ENCODE measurements at regions of chr4 and their contacts with region 1.

Region 1: GRCh38 chr4:184474263-184475095 is at the start of gene IRF2:
- DNase-seq: peak; percentile 90
- ATAC-seq: peak; percentile 66
- H3K4me3 ChIP-seq: peak within 1 kb of the TSS; percentile 99
- H3K27ac ChIP-seq: peak within 1 kb of the TSS; percentile 84
- H3K4me1 ChIP-seq: peaks cover 16% of the 10 kb centered on the region; the same call in 1 of the 2 replicates
- H3K27me3 ChIP-seq: no peaks in the 10 kb centered on the region
- CTCF ChIP-seq: no peak
- total RNA-seq, gene IRF2: 7.7 TPM in 2 replicates

Region 2: GRCh38 chr4:184143770-184144564 is 330.5 kb before region 1 on chr4:
- CTCF ChIA-PET with region 1: no interaction called
- POLR2A ChIA-PET with region 1: no interaction called
- intact Hi-C with region 1: no loop called
- DNase-seq: peak; percentile 7
- ATAC-seq: no peak
- H3K4me3 ChIP-seq: no peak overlapping the region
- H3K27ac ChIP-seq: no peak overlapping the region
- H3K4me1 ChIP-seq: no peaks in the 10 kb centered on the region
- H3K27me3 ChIP-seq: peaks cover 38% of the 10 kb centered on the region
- CTCF ChIP-seq: peak; percentile 37; the same call in 1 of the 2 replicates

Region 3: GRCh38 chr4:184417802-184418511 is 56.5 kb before region 1 on chr4:
- CTCF ChIA-PET with region 1: no interaction called
- POLR2A ChIA-PET with region 1: no interaction called
- intact Hi-C with region 1: loop called (anchors 1 kb)
- DNase-seq: peak; percentile 89
- ATAC-seq: peak; percentile 99
- H3K4me3 ChIP-seq: no peak overlapping the region
- H3K27ac ChIP-seq: peak overlapping the region; percentile 87
- H3K4me1 ChIP-seq: peaks cover 24% of the 10 kb centered on the region
- H3K27me3 ChIP-seq: no peaks in the 10 kb centered on the region
- CTCF ChIP-seq: peak; percentile 27; the same call in 1 of the 2 replicates

Region 4: GRCh38 chr4:184462724-184463123 is 11.8 kb before region 1 on chr4:
- CTCF ChIA-PET with region 1: no interaction called
- POLR2A ChIA-PET with region 1: interaction called, 17 read pairs
- intact Hi-C with region 1: no loop called
- DNase-seq: no peak
- ATAC-seq: no peak; the same call in 1 of the 2 replicates
- H3K4me3 ChIP-seq: no peak overlapping the region
- H3K27ac ChIP-seq: no peak overlapping the region
- H3K4me1 ChIP-seq: no peaks in the 10 kb centered on the region
- H3K27me3 ChIP-seq: no peaks in the 10 kb centered on the region
- CTCF ChIP-seq: no peak

Region 5: DNA sequence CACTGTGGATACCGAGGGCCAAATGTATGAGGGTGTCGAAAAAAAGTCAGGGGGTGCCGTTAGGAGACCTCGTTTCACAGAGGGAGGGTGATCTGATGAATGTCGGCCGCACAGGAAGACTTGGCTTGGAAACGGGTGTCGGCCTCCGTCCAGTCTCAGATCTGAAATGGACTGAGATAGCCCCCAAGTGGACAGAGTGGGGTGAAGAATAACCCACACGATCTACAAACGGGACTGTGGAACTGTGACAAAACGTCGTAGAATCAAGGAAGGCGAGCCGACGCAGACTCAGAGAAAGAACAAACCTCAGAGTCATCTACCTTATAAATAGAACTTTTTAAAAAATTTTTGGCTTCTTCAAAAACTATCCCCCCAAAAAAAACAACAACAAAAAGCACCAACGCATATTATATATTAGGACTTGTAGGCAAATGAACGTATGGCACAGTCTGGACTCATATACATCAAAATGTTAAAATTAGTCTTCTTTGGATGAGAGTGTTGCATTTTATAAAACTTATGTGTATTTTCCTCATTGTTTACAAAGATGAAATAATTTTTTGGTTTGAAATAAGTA is 63.6 kb after region 1 on chr4:
- CTCF ChIA-PET with region 1: interaction called, 5 read pairs
- POLR2A ChIA-PET with region 1: no interaction called
- intact Hi-C with region 1: loop called (anchors 1 kb)
- DNase-seq: peak; percentile 80
- ATAC-seq: peak; percentile 79
- H3K4me3 ChIP-seq: peak overlapping the region; percentile 85
- H3K27ac ChIP-seq: peak overlapping the region; percentile 84
- H3K4me1 ChIP-seq: peaks cover 4% of the 10 kb centered on the region; the same call in 1 of the 2 replicates
- H3K27me3 ChIP-seq: no peaks in the 10 kb centered on the region
- CTCF ChIP-seq: peak; percentile 68

Region 6: DNA sequence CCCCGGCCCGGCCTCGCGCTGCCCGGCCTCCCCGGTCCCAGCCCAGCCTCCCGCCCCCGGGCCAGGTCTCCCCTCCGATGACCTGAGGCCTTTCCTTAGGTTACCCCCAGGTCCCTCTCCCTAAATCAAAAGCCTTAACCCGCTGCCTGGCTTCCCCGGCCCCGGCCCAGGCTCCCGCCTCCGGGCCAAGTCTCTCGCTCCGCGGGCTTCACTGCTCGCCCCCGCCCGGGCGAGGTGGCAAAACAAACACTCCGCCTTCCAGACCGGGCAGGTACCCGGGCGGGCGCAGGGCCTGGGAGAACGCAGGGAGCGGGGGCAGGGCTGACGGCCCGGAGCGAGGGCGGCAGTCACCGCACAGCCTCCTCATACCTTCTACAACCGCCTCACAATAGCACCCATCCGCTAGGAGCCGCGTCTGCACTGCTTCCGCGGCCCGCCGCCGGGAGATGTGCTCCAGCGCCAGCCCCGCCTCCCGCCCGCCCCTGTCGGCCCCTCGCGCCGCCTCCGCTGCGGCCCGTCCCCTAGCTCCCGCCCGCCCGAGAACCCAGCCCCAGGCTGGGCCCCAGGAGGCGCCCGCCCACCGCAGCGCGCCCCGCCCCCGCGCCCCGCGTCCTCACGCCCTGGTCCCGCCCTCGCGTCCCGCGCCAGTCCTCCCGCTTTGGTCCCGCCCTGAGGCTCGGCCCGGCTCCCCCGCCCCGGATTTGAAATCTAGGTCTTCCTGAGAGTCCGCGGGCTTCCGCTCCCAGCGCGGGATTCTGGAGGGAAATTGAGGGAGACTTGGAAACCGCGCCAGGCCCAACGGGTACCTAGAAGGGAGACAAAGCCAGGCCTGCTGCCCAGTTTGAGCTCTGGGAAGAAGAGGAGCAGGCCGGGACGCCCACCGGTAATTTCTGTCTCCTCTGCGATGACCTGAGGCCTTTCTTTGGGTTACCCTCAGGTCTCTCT is 174.8 kb after region 1 on chr4 and contains the starts of genes CASP3 and PRIMPOL:
- CTCF ChIA-PET with region 1: no interaction called
- POLR2A ChIA-PET with region 1: no interaction called
- intact Hi-C with region 1: loop called (anchors 1 kb)
- DNase-seq: peak; percentile 89
- ATAC-seq: peak; percentile 82
- H3K4me3 ChIP-seq: peak within 1 kb of the TSS; percentile 93
- H3K27ac ChIP-seq: peak within 1 kb of the TSS; percentile 57
- H3K4me1 ChIP-seq: peaks cover 21% of the 10 kb centered on the region
- H3K27me3 ChIP-seq: no peaks in the 10 kb centered on the region
- CTCF ChIP-seq: 0 out of 2 replicates have a peak, but pooled peaks have one; percentile 7
- total RNA-seq, gene CASP3: 11.1 and 13.2 TPM in 2 replicates
- total RNA-seq, gene PRIMPOL: 9.3 and 9.4 TPM in 2 replicates

Region 7: GRCh38 chr4:184825896-184826690 is 351.6 kb after region 1 on chr4 and contains the start of gene ACSL1:
- CTCF ChIA-PET with region 1: no interaction called
- POLR2A ChIA-PET with region 1: no interaction called
- intact Hi-C with region 1: loop called (anchors 5 kb)
- DNase-seq: peak; percentile 58
- ATAC-seq: peak; percentile 75
- H3K4me3 ChIP-seq: peak within 1 kb of the TSS; percentile 80
- H3K27ac ChIP-seq: no peak within 1 kb of the TSS
- H3K4me1 ChIP-seq: peaks cover 14% of the 10 kb centered on the region
- H3K27me3 ChIP-seq: no peaks in the 10 kb centered on the region
- CTCF ChIP-seq: no peak
- total RNA-seq, gene ACSL1: 20.0 and 22.9 TPM in 2 replicates

Measured in PC-3 (cell line).